PC-9 (cell line): ENCODE measurements at regions of chr10 and their contacts with region 1.

Region 1: DNA sequence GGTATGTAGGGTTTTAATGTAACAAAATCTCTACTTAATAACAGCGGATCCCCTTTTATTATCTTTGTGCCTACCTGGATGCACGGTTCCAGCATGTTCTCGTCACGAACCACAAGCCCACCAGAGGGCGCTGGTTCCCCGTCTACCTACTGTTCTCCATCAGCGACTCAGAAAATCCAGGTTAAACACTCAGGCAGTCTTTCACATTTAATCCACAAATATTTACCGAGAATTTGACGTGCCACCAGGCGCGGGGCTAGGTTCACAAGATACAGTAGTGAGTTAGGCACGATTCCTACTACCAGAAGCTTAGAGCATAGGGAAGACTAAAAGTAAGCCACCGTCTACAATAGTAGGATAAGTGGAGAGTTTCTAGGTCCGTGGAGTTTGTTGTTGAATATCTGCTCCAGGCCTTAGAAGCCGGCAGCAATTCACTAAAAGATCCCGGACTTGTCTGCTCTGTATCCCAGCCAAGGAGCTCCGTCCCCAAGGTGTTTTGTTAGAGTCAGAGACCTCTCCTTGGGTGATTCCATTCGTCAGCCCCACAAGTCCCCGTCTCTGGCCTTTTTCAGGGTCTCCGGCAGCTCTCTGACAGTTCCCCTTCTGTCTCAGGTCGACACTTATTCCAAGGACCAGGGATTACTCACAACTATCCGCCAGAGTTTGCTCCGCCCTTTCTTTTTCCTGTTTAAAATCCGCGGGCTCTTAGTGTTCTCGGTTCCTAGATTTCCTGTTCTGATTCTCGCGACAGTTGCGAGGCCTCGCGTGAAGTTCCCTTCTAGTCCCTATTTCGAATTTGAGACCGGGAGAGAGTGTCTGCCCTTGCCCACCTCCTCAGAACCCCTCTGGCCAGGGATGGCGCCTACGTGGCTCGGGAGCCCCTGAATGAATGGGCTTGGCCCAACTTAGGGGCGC is 1.5 kb upstream of the KAZALD1 start:
- DNase-seq: peak; percentile 74 to 85
- H3K4me3 ChIP-seq: peak overlapping the region; percentile 62
- H3K27ac ChIP-seq: peak overlapping the region; percentile 86
- H3K4me1 ChIP-seq: peaks cover 19% of the 10 kb centered on the region
- H3K27me3 ChIP-seq: no peaks in the 10 kb centered on the region
- CTCF ChIP-seq: peak; percentile 85

Region 2: DNA sequence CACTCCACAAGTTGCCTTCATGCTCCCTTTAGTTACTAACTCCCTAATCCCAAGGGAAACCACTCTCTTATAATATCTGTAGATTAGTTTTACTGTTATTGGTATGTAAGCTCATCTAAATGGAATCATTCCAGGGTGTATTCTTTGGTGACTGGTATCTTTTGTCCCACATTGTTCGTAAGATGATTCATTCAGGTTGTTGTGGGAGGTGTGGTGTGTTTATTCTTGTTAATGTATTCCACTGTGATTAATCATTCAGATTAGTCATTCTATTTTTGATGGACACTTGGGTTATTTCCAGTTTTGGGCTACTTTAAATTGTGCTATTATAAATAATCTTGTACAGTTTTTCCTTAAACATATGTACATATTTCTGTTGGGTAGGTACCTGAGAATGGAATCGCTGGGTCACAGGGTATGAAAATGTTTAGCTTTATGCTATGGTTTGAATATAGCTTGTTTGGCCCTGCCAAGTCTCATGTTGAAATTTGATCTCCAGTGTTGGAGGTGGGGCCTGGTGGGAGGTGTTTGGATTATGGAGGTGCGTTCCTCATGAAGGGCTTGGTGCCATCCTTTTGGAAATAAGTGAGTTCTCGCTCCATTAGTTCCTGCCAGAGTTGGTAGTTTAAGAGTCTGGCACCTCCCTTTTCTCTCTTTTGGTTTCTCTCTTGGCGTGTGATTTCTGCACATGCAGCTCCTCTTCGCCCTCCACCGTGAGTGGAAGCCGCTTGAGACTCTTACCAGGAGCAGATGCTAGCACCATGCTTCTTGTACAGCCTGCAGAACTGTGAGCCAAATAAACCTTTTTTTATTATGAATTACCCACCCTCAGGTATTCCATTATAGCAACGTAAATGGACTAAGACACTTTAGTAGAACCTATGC is 307.5 kb after region 1 on chr10:
- CTCF ChIA-PET with region 1: no interaction called
- POLR2A ChIA-PET with region 1: interaction called, 12 read pairs
- intact Hi-C with region 1: no loop called
- DNase-seq: peak; percentile 58 to 92
- H3K4me3 ChIP-seq: no peak overlapping the region; the same call in 1 of the 2 replicates
- H3K27ac ChIP-seq: peak overlapping the region; percentile 53
- H3K4me1 ChIP-seq: peaks cover 7% of the 10 kb centered on the region; the same call in 1 of the 2 replicates
- H3K27me3 ChIP-seq: no peaks in the 10 kb centered on the region
- CTCF ChIP-seq: no peak